ENCODE measurements at regions of chr3 and their contacts with region 1.

Region 1: DNA sequence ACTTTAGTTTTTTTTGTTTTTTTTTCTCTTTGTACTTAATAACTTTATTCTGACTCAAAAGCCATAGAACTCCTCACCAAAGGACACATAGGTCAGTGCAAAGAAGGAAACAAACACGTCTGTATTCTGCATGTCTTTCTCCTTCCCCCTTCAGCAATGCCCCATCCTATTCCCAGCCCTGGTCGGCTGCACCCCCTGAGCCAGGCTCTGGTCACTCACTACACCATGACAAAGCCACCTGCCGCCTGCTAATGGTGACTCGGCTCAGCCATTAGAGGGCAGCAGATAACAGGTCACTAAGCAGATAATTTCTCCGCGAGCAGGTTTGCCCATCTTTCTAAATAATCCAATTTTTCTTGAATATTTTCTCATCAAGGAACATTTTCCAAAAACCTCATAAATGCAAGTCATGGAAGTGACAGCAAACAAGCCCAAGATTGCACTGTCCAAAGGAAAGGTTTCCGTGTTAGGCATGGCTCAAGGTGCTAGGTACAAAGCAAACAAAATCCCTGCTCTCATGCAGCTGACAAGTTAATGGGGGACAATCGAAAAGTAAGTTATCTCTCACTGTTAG is 37.8 kb downstream of the TM4SF4 start:
- DNase-seq: peak in 1 of 2 experiments; percentile 72
- H3K4me3 ChIP-seq: peak overlapping the region in 1 of 4 experiments; percentile 34; a peak in 1 of 8 replicates
- H3K27ac ChIP-seq: no peak overlapping the region
- H3K4me1 ChIP-seq: no peaks in the 10 kb centered on the region
- H3K27me3 ChIP-seq: no peaks in the 10 kb centered on the region
- CTCF ChIP-seq: peak; percentile 81 to 92 (median 89)
- EP300 ChIP-seq: no peak
- POLR2A ChIP-seq: no peak
- RAD21 ChIP-seq: peak; percentile 92 to 93

Region 2: DNA sequence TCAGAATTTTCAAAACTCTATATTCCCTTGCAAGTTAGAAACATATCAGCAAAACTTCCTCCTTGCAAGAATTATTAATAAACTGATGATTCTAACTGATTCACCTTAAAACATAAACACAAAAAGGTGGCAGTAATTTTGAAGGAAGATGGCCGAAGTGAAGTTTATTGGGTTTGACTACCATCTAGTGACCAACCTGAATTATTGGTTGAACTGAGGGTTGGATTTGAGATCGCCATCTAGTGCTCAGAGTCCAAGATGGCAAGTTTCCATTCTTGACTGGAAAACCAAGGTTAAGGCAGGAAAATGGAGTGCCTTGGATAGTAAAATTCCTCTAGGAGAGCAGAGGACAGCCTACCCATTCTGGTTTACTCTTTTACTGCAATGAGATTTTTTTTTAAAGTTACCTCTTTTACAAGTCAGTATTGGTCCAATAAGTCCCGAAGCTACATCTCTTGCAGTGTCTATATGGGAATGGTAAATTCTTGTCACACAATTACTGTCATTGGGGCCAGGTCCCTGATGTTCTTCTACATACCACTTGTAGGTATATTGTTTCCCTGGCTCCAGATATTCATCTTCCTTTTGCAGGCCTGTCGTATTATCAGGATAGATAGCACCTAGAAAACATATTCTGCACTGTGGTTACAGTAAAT is 239.1 kb before region 1 on chr3:
- CTCF ChIA-PET with region 1: no interaction called
- POLR2A ChIA-PET with region 1: no interaction called
- DNase-seq: peak in 1 of 2 experiments; percentile 56
- H3K4me3 ChIP-seq: no peak overlapping the region
- H3K27ac ChIP-seq: no peak overlapping the region
- H3K4me1 ChIP-seq: no peaks in the 10 kb centered on the region; a peak in 1 of 7 replicates
- H3K27me3 ChIP-seq: no peaks in the 10 kb centered on the region
- CTCF ChIP-seq: peak in 2 of 3 experiments; percentile 99 to 100; a peak in 3 of 4 replicates
- EP300 ChIP-seq: no peak
- POLR2A ChIP-seq: no peak
- RAD21 ChIP-seq: peak; percentile 100

Region 3: DNA sequence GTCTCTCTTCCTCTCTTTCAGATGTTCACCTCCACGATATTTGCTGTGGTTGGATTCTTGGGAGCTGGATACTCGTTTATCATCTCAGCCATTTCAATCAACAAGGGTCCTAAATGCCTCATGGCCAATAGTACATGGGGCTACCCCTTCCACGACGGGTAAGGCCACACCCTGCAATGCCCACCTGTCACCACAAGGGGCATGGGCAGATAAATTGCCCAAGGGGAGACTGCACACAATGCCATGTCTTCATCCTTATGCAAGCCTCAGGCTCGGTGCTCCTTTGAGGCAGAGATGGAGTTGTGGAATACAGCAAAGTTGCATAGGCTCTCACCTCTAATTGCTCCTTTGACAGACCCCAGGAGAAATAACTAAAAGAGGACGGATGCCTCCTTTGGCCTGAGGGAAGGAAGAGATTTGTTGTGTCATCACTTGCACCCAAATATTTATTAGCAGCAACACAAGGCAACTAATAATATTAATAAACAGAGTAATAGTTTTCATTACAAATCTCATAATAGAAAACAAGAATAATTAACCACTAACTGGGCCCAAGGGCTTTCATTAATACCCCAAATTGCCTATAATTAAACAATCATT is 24.6 kb before region 1 on chr3:
- CTCF ChIA-PET with region 1: interaction called, 12 read pairs
- POLR2A ChIA-PET with region 1: no interaction called
- DNase-seq: peak in 1 of 2 experiments; percentile 85
- H3K4me3 ChIP-seq: no peak overlapping the region
- H3K27ac ChIP-seq: no peak overlapping the region
- H3K4me1 ChIP-seq: no peaks in the 10 kb centered on the region
- H3K27me3 ChIP-seq: no peaks in the 10 kb centered on the region
- CTCF ChIP-seq: peak; percentile 71 to 95 (median 92)
- EP300 ChIP-seq: no peak
- POLR2A ChIP-seq: no peak
- RAD21 ChIP-seq: peak; percentile 41 to 59

Region 4: GRCh38 chr3:149501524-149501923 is 10.8 kb before region 1 on chr3:
- CTCF ChIA-PET with region 1: interaction called, 27 read pairs
- POLR2A ChIA-PET with region 1: no interaction called
- DNase-seq: no peak
- H3K4me3 ChIP-seq: no peak overlapping the region; a peak in 1 of 8 replicates
- H3K27ac ChIP-seq: no peak overlapping the region
- H3K4me1 ChIP-seq: no peaks in the 10 kb centered on the region
- H3K27me3 ChIP-seq: no peaks in the 10 kb centered on the region
- CTCF ChIP-seq: no peak
- EP300 ChIP-seq: no peak
- POLR2A ChIP-seq: no peak
- RAD21 ChIP-seq: no peak

Region 5: DNA sequence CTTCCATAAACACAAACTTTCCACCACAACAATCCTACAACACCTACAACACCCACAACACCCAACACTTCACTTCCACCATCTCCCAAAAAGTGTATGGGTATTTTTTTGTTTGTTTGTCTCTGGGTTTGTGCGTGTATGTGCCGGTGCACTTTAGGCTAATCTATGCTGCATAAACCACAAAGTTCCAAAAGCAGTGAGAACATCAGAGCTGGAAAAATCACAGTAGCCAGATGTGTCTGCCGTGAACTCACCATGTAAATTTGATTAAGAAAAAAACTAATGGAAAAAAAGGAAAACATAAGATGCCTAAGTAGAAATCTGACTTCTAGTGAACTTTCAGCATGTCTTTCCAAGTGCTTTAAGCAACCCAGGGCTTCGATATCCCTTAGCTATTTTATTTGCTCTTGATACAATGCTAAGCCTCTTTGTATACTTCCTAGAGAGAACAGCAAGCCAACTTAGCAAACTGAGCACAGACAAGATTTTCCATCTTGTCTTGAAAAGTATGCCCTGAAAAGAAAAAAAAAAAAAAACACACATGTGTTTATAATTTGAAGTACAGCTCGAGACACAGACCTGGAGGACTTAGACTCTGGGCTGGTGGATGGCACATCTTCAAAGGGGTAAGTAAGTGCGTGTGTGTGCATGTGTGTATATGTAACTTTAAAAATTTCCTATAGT is 54.1 kb after region 1 on chr3:
- CTCF ChIA-PET with region 1: interaction called, 15 read pairs
- POLR2A ChIA-PET with region 1: no interaction called
- DNase-seq: no peak
- H3K4me3 ChIP-seq: no peak overlapping the region
- H3K27ac ChIP-seq: no peak overlapping the region
- H3K4me1 ChIP-seq: peaks cover 0 to 6% (median 3%) of the 10 kb centered on the region in 4 experiments; a peak in 4 of 7 replicates
- H3K27me3 ChIP-seq: no peaks in the 10 kb centered on the region
- CTCF ChIP-seq: no peak
- EP300 ChIP-seq: no peak
- POLR2A ChIP-seq: no peak
- RAD21 ChIP-seq: no peak

Region 6: GRCh38 chr3:149765762-149766334 is 253.6 kb after region 1 on chr3:
- CTCF ChIA-PET with region 1: interaction called, 53 read pairs
- POLR2A ChIA-PET with region 1: no interaction called
- DNase-seq: no peak
- H3K4me3 ChIP-seq: no peak overlapping the region
- H3K27ac ChIP-seq: no peak overlapping the region
- H3K4me1 ChIP-seq: no peaks in the 10 kb centered on the region
- H3K27me3 ChIP-seq: no peaks in the 10 kb centered on the region
- CTCF ChIP-seq: peak in 2 of 3 experiments; percentile 52 to 59; a peak in 2 of 4 replicates
- EP300 ChIP-seq: no peak
- POLR2A ChIP-seq: no peak
- RAD21 ChIP-seq: peak; percentile 53 to 63